ENCODE measurements at regions of chr3 and their contacts with region 1.

Region 1: GRCh38 chr3:67384760-67385397 is 269.5 kb downstream of the SUCLG2 start:
- DNase-seq: peak; percentile 9 to 17
- ATAC-seq: peak in 7 of 8 donors; percentile 25 to 77 (median 67)
- H3K4me3 ChIP-seq: no peak overlapping the region
- H3K27ac ChIP-seq: no peak overlapping the region
- H3K4me1 ChIP-seq: peaks cover 0 to 35% (median 14%) of the 10 kb centered on the region in 9 donors
- H3K27me3 ChIP-seq: no peaks in the 10 kb centered on the region
- CTCF ChIP-seq: peak in 8 of 9 donors; percentile 6 to 62 (median 55)

Region 2: GRCh38 chr3:67335813-67336212 is 49.1 kb before region 1 on chr3:
- intact Hi-C with region 1: no loop called
- DNase-seq: no peak
- ATAC-seq: no peak
- H3K4me3 ChIP-seq: no peak overlapping the region
- H3K27ac ChIP-seq: no peak overlapping the region
- H3K4me1 ChIP-seq: no peaks in the 10 kb centered on the region
- H3K27me3 ChIP-seq: no peaks in the 10 kb centered on the region
- CTCF ChIP-seq: no peak

Region 3: GRCh38 chr3:67783281-67784250 is 398.7 kb after region 1 on chr3:
- intact Hi-C with region 1: loop called in 4 of 10 experiments (anchors 5 to 10 kb)
- DNase-seq: no peak
- ATAC-seq: no peak
- H3K4me3 ChIP-seq: no peak overlapping the region
- H3K27ac ChIP-seq: no peak overlapping the region
- H3K4me1 ChIP-seq: no peaks in the 10 kb centered on the region
- H3K27me3 ChIP-seq: no peaks in the 10 kb centered on the region
- CTCF ChIP-seq: no peak

Region 4: DNA sequence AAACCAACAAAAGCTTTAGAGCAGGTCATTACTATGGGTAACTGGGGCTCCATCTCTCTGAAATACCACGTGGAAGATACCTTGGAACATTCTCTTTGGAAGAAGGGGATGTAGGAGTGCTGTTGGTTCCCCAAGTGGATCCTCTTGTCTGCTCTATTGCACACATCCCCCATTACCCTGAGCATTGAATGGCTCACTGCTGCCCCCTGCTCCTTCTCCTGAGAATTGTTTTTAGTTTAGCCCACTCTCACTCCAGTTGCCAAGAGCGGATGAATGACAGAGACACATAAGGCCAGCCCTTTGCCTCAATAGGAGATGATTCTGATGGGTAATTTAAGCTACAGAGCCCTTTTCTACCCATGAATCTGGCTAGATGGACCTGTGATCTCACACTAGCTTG is 405.2 kb after region 1 on chr3:
- intact Hi-C with region 1: loop called in 7 of 10 experiments (anchors 2 to 10 kb)
- DNase-seq: peak; percentile 11 to 25
- ATAC-seq: peak in 5 of 8 donors; percentile 41 to 61 (median 50)
- H3K4me3 ChIP-seq: no peak overlapping the region
- H3K27ac ChIP-seq: no peak overlapping the region
- H3K4me1 ChIP-seq: no peaks in the 10 kb centered on the region
- H3K27me3 ChIP-seq: no peaks in the 10 kb centered on the region
- CTCF ChIP-seq: peak; percentile 29 to 63 (median 55)

Region 5: DNA sequence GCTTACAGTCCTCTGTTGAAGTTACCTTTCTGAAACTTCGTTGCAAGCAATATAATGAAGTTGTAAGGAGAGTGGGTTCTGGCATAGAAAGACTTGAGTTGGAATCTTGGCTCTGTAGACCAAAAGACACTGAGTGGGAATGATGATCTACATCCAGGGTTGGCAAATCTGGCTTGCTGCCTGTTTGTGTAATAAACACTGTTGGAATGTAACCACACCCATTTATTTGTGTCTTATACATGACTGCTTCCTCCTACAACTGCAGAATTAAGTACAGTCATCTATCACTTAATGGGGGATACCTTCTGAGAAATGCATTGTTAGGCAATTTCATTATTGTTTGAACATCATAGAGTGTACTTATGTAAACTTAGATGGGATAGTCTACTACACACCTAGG is 447.9 kb after region 1 on chr3:
- intact Hi-C with region 1: no loop called
- DNase-seq: no peak
- ATAC-seq: no peak
- H3K4me3 ChIP-seq: no peak overlapping the region
- H3K27ac ChIP-seq: no peak overlapping the region
- H3K4me1 ChIP-seq: no peaks in the 10 kb centered on the region
- H3K27me3 ChIP-seq: no peaks in the 10 kb centered on the region
- CTCF ChIP-seq: no peak